ENCODE measurements at regions of chr11 and their contacts with region 1.

Region 1: GRCh38 chr11:87352759-87353707 is 315.3 kb downstream of the TMEM135 start:
- DNase-seq: peak; percentile 75 to 92 (median 86)
- H3K4me3 ChIP-seq: peak overlapping the region in 6 of 59 donors; percentile 3 to 41 (median 26)
- H3K27ac ChIP-seq: peak overlapping the region in 24 of 59 donors; percentile 1 to 81 (median 32)
- H3K27me3 ChIP-seq: no peaks in the 10 kb centered on the region
- CTCF ChIP-seq: peak; percentile 91 to 100 (median 99)

Region 2: GRCh38 chr11:87421422-87421821 is 68.4 kb after region 1 on chr11:
- intact Hi-C with region 1: loop called (anchors 1 to 2 kb)
- DNase-seq: peak in 2 of 10 donors; percentile 19 to 22
- H3K4me3 ChIP-seq: no peak overlapping the region
- H3K27ac ChIP-seq: no peak overlapping the region
- H3K27me3 ChIP-seq: no peaks in the 10 kb centered on the region
- CTCF ChIP-seq: peak; percentile 67 to 92 (median 83)

Region 3: DNA sequence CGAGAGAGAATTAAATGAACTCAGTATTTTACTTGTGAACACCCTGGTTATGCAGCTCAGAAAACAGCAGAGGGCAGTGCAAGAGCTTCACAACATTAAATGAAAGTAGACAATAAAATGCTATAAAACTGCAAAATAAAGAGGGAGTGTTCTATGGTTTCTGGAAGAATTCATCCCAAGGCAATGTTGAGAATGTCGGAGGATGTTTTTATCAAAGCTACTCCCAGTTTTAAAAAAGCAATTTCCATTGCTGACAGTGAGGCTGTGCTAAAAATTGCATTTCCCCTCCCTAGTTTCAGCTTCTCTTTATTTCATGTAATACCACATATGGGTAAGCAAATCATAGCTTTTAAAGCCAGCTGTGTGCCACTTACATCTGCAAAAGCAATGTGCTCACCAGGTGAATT is 525.3 kb after region 1 on chr11:
- intact Hi-C with region 1: no loop called
- DNase-seq: peak in 4 of 10 donors; percentile 3 to 54 (median 30)
- H3K4me3 ChIP-seq: no peak overlapping the region
- H3K27ac ChIP-seq: no peak overlapping the region
- H3K27me3 ChIP-seq: no peaks in the 10 kb centered on the region
- CTCF ChIP-seq: peak in 52 of 56 donors; percentile 26 to 63 (median 48)

Region 4: DNA sequence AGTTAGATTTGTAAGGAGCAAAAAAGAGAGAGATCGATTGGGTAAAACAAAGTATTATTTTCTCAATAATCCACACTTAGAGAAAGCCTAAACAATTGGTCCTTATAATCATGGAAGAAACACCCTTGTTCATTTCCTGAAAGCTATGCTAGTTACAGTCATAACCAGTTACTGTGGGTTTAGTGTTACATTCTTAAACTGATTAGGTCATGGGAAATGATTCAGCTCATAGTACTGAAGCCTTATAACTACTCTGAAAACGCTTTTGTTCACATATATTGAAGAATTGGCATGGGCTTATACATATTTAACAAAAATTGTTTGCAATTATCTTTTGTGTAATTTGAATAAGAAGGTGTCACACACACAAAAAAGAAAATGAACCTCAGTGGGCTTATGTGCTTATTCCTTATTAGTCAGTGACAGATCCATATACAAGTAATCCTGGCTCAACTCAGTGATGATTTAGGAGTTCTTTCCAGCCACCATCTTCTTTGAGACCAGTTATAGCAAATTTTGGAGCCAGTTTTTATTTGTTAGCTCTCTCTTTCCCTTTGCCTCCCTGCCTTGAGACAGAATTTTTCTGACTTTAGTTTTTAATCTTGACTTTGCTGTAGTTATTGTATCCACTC is 1183.0 kb after region 1 on chr11:
- intact Hi-C with region 1: loop called (anchors 10 kb)
- DNase-seq: no peak
- H3K4me3 ChIP-seq: no peak overlapping the region
- H3K27ac ChIP-seq: no peak overlapping the region
- H3K27me3 ChIP-seq: no peaks in the 10 kb centered on the region
- CTCF ChIP-seq: no peak

Region 5: GRCh38 chr11:88543902-88544655 is 1191.0 kb after region 1 on chr11:
- intact Hi-C with region 1: loop called (anchors 10 kb)
- DNase-seq: peak; percentile 14 to 77 (median 68)
- H3K4me3 ChIP-seq: no peak overlapping the region
- H3K27ac ChIP-seq: no peak overlapping the region
- H3K27me3 ChIP-seq: no peaks in the 10 kb centered on the region
- CTCF ChIP-seq: peak in 55 of 56 donors; percentile 36 to 95 (median 82)

Region 6: DNA sequence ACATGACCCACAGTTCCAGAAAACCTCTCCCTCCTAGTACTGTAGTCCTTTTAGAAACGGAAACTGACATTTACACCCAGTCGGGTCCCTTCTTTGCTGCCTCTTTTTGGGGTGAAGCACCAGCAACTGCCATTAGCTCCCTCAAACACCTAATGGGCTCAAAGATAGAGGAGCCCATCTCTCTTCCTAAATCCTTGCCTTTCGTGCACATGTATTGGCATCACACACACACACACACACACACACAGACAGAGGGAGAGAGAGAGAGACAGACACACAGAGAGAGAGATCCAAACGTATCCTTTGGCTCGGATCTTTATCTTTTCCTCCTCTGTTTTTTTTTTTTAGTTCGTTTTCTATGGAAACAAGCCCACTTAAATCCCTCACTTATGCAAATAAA is 1712.0 kb after region 1 on chr11:
- intact Hi-C with region 1: loop called in 1 of 2 experiments (anchors 10 kb)
- DNase-seq: no peak
- H3K4me3 ChIP-seq: peak overlapping the region in 54 of 59 donors; percentile 18 to 69 (median 56)
- H3K27ac ChIP-seq: peak overlapping the region in 38 of 59 donors; percentile 14 to 87 (median 74)
- H3K27me3 ChIP-seq: peaks cover 0 to 39% (median 4%) of the 10 kb centered on the region in 45 donors
- CTCF ChIP-seq: no peak

Measured in dorsolateral prefrontal cortex (tissue), 120 donors.